T-cell (primary cell): ENCODE measurements at regions of chr11 and their contacts with region 1.

Region 1: GRCh38 chr11:35030716-35031213 is 108.2 kb upstream of the CD44 start:
- DNase-seq: peak in 4 of 35 experiments; percentile 26 to 48 (median 30)
- ATAC-seq: peak in 3 of 4 experiments; percentile 34 to 59 (median 56)
- H3K4me3 ChIP-seq: no peak overlapping the region
- H3K4me3 Mint-ChIP-seq: peak overlapping the region; percentile 28 to 66 (median 50)
- H3K27ac ChIP-seq: peak overlapping the region; percentile 48
- H3K27ac Mint-ChIP-seq: peak overlapping the region; percentile 94
- H3K4me1 ChIP-seq: peaks cover 10 to 15% of the 10 kb centered on the region in 2 experiments
- H3K4me1 Mint-ChIP-seq: peaks cover 39 to 56% (median 55%) of the 10 kb centered on the region in 3 donors
- H3K27me3 ChIP-seq: no peaks in the 10 kb centered on the region
- H3K27me3 Mint-ChIP-seq: no peaks in the 10 kb centered on the region

Region 2: GRCh38 chr11:35047179-35047578 is 16.4 kb after region 1 on chr11:
- CTCF ChIA-PET with region 1: interaction called, 5 to 12 read pairs
- POLR2A ChIA-PET with region 1: interaction called, 4 to 12 read pairs
- DNase-seq: peak in 34 of 35 experiments; percentile 29 to 86 (median 58)
- ATAC-seq: peak; percentile 67 to 72 (median 70)
- H3K4me3 ChIP-seq: no peak overlapping the region
- H3K4me3 Mint-ChIP-seq: peak overlapping the region; percentile 1 to 77 (median 42)
- H3K27ac ChIP-seq: peak overlapping the region; percentile 98
- H3K27ac Mint-ChIP-seq: peak overlapping the region; percentile 93 to 95
- H3K4me1 ChIP-seq: peaks cover 59 to 85% of the 10 kb centered on the region in 2 experiments
- H3K4me1 Mint-ChIP-seq: peaks cover 95 to 97% (median 97%) of the 10 kb centered on the region in 3 donors
- H3K27me3 ChIP-seq: no peaks in the 10 kb centered on the region
- H3K27me3 Mint-ChIP-seq: no peaks in the 10 kb centered on the region

Region 3: GRCh38 chr11:35182317-35182939 is 151.7 kb after region 1 on chr11:
- CTCF ChIA-PET with region 1: interaction called in 1 of 2 experiments, 3 read pairs
- POLR2A ChIA-PET with region 1: interaction called in 1 of 2 experiments, 12 read pairs
- DNase-seq: no peak
- ATAC-seq: peak in 1 of 4 experiments; percentile 5
- H3K4me3 ChIP-seq: no peak overlapping the region
- H3K4me3 Mint-ChIP-seq: peak overlapping the region; percentile 18 to 23 (median 21)
- H3K27ac ChIP-seq: peak overlapping the region; percentile 50
- H3K27ac Mint-ChIP-seq: peak overlapping the region; percentile 92 to 94
- H3K4me1 ChIP-seq: peaks cover 49 to 69% of the 10 kb centered on the region in 2 experiments
- H3K4me1 Mint-ChIP-seq: peaks cover 82 to 88% (median 86%) of the 10 kb centered on the region in 3 donors
- H3K27me3 ChIP-seq: no peaks in the 10 kb centered on the region
- H3K27me3 Mint-ChIP-seq: no peaks in the 10 kb centered on the region

Region 4: GRCh38 chr11:35511666-35512065 is 480.9 kb after region 1 on chr11:
- CTCF ChIA-PET with region 1: no interaction called
- POLR2A ChIA-PET with region 1: no interaction called
- DNase-seq: no peak
- ATAC-seq: no peak
- H3K4me3 ChIP-seq: no peak overlapping the region
- H3K4me3 Mint-ChIP-seq: no peak overlapping the region
- H3K27ac ChIP-seq: no peak overlapping the region
- H3K27ac Mint-ChIP-seq: no peak overlapping the region
- H3K4me1 ChIP-seq: no peaks in the 10 kb centered on the region
- H3K4me1 Mint-ChIP-seq: no peaks in the 10 kb centered on the region
- H3K27me3 ChIP-seq: peaks cover 0 to 9% of the 10 kb centered on the region in 2 experiments
- H3K27me3 Mint-ChIP-seq: peaks cover 37 to 53% of the 10 kb centered on the region in 2 donors